Aorta (tissue), 5 donors: ENCODE measurements at regions of chr17 and their contacts with region 1.

Region 1: DNA sequence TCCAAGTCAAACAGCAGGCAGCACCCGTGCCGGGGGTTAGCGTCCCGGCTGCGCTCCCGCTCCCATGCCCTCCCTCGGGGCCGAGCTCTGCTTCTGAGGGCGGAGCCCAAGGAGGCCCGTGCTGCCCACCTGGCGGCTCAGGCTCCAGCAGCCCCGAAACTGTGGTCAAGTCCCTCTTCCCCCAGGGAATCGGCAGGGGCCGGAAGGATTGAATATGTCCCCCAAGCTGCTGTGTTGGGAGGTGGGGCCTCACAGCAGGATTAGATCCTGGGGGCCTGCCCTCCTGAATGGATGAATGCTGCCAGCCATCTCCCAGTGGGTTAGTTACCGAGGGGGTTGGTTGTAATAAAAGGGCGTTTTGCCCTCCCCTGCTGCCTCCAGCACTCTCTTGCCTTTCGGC is 33.9 kb downstream of the MAP2K3 start:
- DNase-seq: peak; percentile 49 to 75
- ATAC-seq: no peak
- H3K4me3 ChIP-seq: no peak overlapping the region
- H3K27ac ChIP-seq: no peak overlapping the region
- H3K4me1 ChIP-seq: no peaks in the 10 kb centered on the region
- H3K27me3 ChIP-seq: no peaks in the 10 kb centered on the region

Region 2: GRCh38 chr17:21457051-21458026 is 138.9 kb after region 1 on chr17:
- intact Hi-C with region 1: loop called in 1 of 2 experiments (anchors 10 kb)
- DNase-seq: peak; percentile 91 to 98
- ATAC-seq: peak; percentile 93
- H3K4me3 ChIP-seq: no peak overlapping the region
- H3K27ac ChIP-seq: no peak overlapping the region
- H3K4me1 ChIP-seq: no peaks in the 10 kb centered on the region
- H3K27me3 ChIP-seq: no peaks in the 10 kb centered on the region